H1 (cell line): ENCODE measurements at regions of chr7 and their contacts with region 1.

Region 1: GRCh38 chr7:152959610-152960009 is 200.1 kb downstream of the ACTR3B start:
- DNase-seq: no peak
- H3K4me3 ChIP-seq: no peak overlapping the region
- H3K27ac ChIP-seq: no peak overlapping the region
- H3K4me1 ChIP-seq: peaks cover 0 to 3% (median 0%) of the 10 kb centered on the region in 4 experiments; a peak in 1 of 7 replicates
- H3K27me3 ChIP-seq: no peaks in the 10 kb centered on the region
- CTCF ChIP-seq: peak; percentile 56 to 73 (median 62)
- EP300 ChIP-seq: no peak
- POLR2A ChIP-seq: no peak
- RAD21 ChIP-seq: peak; percentile 73 to 80

Region 2: GRCh38 chr7:152850420-152850819 is 109.2 kb before region 1 on chr7:
- CTCF ChIA-PET with region 1: no interaction called
- POLR2A ChIA-PET with region 1: no interaction called
- DNase-seq: no peak
- H3K4me3 ChIP-seq: no peak overlapping the region
- H3K27ac ChIP-seq: no peak overlapping the region
- H3K4me1 ChIP-seq: no peaks in the 10 kb centered on the region
- H3K27me3 ChIP-seq: no peaks in the 10 kb centered on the region
- CTCF ChIP-seq: no peak
- EP300 ChIP-seq: no peak
- POLR2A ChIP-seq: no peak
- RAD21 ChIP-seq: no peak

Region 3: GRCh38 chr7:152947686-152948085 is 11.9 kb before region 1 on chr7:
- CTCF ChIA-PET with region 1: interaction called, 12 read pairs
- POLR2A ChIA-PET with region 1: no interaction called
- DNase-seq: no peak
- H3K4me3 ChIP-seq: no peak overlapping the region
- H3K27ac ChIP-seq: no peak overlapping the region
- H3K4me1 ChIP-seq: no peaks in the 10 kb centered on the region
- H3K27me3 ChIP-seq: no peaks in the 10 kb centered on the region
- CTCF ChIP-seq: no peak
- EP300 ChIP-seq: no peak
- POLR2A ChIP-seq: no peak
- RAD21 ChIP-seq: no peak

Region 4: GRCh38 chr7:153109566-153109965 is 150.0 kb after region 1 on chr7:
- CTCF ChIA-PET with region 1: interaction called, 38 read pairs
- POLR2A ChIA-PET with region 1: no interaction called
- DNase-seq: no peak
- H3K4me3 ChIP-seq: no peak overlapping the region
- H3K27ac ChIP-seq: no peak overlapping the region
- H3K4me1 ChIP-seq: peaks cover 0 to 4% (median 0%) of the 10 kb centered on the region in 4 experiments; a peak in 1 of 7 replicates
- H3K27me3 ChIP-seq: no peaks in the 10 kb centered on the region
- CTCF ChIP-seq: no peak
- EP300 ChIP-seq: no peak
- POLR2A ChIP-seq: no peak
- RAD21 ChIP-seq: no peak